Caco-2 (cell line): ENCODE measurements at regions of chr2 and their contacts with region 1.

Region 1: DNA sequence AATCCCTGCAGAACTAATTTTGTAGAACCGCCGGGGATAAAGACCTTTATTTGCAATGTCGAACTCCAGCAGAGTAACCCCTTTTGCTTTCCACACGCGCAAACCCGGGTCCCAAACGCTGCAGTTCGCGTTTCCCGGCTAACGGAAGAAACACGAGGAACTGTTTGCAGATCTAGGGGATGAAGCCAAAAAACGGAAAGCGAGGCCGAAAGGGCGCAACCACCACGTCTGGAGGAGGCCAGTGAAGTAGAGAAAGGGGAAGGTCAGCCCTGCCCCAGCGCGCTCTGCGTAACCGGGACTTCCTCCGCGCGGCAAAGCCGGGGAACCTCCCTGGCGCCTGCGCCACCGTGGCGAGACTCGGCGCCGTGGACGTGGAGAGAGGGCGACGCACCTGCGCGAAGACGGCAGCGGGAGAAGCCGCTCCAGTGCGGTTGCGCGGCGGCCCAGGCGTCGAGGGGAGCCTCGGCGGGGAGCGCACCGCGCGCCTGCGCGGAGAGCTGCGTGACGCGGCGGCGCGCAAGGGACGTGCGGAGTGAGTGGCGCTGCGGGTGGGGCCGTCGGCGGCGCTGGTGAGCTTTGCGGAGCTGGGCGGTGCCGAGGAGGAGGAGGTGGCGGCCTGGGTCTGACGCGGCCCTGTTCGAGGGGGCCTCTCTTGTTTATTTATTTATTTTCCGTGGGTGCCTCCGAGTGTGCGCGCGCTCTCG is at the start of gene PPP1CB:
- DNase-seq: peak; percentile 96 to 97
- H3K4me3 ChIP-seq: peak within 1 kb of the TSS; percentile 89
- H3K4me3 Mint-ChIP-seq: peak within 1 kb of the TSS; percentile 97
- H3K27ac Mint-ChIP-seq: peak within 1 kb of the TSS; percentile 99
- H3K4me1 ChIP-seq: peaks cover 15% of the 10 kb centered on the region
- H3K4me1 Mint-ChIP-seq: peaks cover 31% of the 10 kb centered on the region
- H3K27me3 ChIP-seq: no peaks in the 10 kb centered on the region
- H3K27me3 Mint-ChIP-seq: no peaks in the 10 kb centered on the region
- CTCF ChIP-seq: peak in 1 of 2 experiments; percentile 43
- total RNA-seq, gene PPP1CB: 185 and 190 TPM in 2 replicates

Region 2: DNA sequence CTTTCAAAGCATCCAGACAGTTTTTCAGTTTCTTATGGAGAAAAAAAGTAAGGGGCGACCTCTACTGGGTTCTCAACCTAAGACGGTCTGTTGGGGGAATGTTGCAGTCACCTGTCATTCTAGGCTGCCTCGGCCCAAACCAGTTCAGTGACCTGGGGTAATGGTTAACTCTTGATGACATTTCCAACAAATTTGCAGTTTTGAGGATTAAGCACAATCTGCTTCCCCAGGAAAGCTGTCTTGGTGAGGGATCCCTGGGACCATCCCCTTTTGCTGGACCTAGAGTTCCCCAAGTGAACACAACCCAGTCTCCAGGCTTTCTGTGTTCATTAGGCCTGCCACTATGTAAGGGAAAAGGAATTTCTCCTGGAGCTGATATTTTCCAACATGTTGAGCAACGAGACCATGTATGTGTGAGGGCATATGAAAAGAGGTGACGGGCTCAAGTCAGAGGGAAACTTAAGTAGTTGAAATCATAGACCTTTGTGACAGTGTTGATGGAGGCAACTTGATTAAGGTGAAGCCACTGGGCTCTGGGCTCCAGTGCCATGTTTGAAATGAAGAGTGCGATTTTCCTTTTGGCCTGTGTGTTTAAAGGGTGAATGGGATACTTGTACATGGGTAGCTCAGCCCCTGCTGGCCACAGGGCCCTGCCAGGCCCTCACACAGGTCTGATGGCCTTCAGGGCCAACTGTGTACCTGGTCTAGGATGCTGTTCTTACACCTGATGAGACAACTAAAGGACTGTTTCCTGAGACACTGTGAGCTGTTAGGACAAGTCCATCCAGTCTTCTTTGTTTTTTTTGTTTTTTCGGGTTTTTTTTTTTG is 331.7 kb before region 1 on chr2:
- CTCF ChIA-PET with region 1: no interaction called
- POLR2A ChIA-PET with region 1: no interaction called
- intact Hi-C with region 1: loop called (anchors 1 kb)
- DNase-seq: peak; percentile 85 to 86
- H3K4me3 ChIP-seq: no peak overlapping the region
- H3K4me3 Mint-ChIP-seq: peak overlapping the region; percentile 52
- H3K27ac Mint-ChIP-seq: peak overlapping the region; percentile 93
- H3K4me1 ChIP-seq: peaks cover 23% of the 10 kb centered on the region
- H3K4me1 Mint-ChIP-seq: peaks cover 19% of the 10 kb centered on the region
- H3K27me3 ChIP-seq: no peaks in the 10 kb centered on the region
- H3K27me3 Mint-ChIP-seq: no peaks in the 10 kb centered on the region
- CTCF ChIP-seq: peak; percentile 32 to 47

Region 3: DNA sequence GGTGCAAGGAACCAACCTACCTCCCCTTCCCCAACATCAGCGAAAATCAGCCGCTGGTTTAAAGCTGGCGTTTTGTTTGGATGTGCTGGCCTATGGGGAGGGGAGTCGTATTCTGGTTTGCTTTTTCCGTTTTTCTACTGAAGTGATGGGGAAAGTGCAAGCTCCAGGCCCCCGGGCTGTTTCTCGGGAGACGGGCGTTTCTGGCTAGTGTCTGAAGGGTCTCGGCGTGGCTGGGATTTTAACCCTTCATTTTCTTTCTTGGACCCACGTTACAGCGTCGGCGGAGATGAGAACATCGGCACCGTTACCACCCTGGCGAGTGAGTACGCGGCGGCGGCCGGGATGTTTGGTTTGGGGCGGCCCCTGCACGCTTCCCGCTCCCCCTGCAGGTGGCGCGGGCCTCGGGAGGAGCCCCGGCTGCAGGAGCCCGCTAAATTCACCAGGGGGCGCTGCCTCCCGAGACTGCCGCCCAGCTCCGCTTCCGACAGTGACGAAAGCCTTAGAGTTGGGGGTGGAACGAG is 184.8 kb before region 1 on chr2:
- CTCF ChIA-PET with region 1: interaction called, 9 read pairs
- POLR2A ChIA-PET with region 1: interaction called, 4 read pairs
- intact Hi-C with region 1: loop called (anchors 1 kb)
- DNase-seq: peak; percentile 80 to 93
- H3K4me3 ChIP-seq: peak overlapping the region; percentile 31
- H3K4me3 Mint-ChIP-seq: peak overlapping the region; percentile 76
- H3K27ac Mint-ChIP-seq: peak overlapping the region; percentile 62
- H3K4me1 ChIP-seq: peaks cover 22% of the 10 kb centered on the region
- H3K4me1 Mint-ChIP-seq: peaks cover 11% of the 10 kb centered on the region
- H3K27me3 ChIP-seq: no peaks in the 10 kb centered on the region
- H3K27me3 Mint-ChIP-seq: no peaks in the 10 kb centered on the region
- CTCF ChIP-seq: peak; percentile 99 to 100

Region 4: GRCh38 chr2:28621172-28622100 is 130.0 kb before region 1 on chr2:
- CTCF ChIA-PET with region 1: interaction called, 5 read pairs
- POLR2A ChIA-PET with region 1: no interaction called
- intact Hi-C with region 1: loop called (anchors 1 kb)
- DNase-seq: peak in 1 of 2 experiments; percentile 51
- H3K4me3 ChIP-seq: no peak overlapping the region
- H3K4me3 Mint-ChIP-seq: no peak overlapping the region
- H3K27ac Mint-ChIP-seq: peak overlapping the region; percentile 80
- H3K4me1 ChIP-seq: peaks cover 20% of the 10 kb centered on the region
- H3K4me1 Mint-ChIP-seq: peaks cover 28% of the 10 kb centered on the region
- H3K27me3 ChIP-seq: no peaks in the 10 kb centered on the region
- H3K27me3 Mint-ChIP-seq: no peaks in the 10 kb centered on the region
- CTCF ChIP-seq: peak in 1 of 2 experiments; percentile 55

Region 5: GRCh38 chr2:28654978-28655320 is 96.5 kb before region 1 on chr2:
- CTCF ChIA-PET with region 1: interaction called, 3 read pairs
- POLR2A ChIA-PET with region 1: interaction called, 6 read pairs
- intact Hi-C with region 1: loop called (anchors 2 kb)
- DNase-seq: peak; percentile 75 to 81
- H3K4me3 ChIP-seq: no peak overlapping the region
- H3K4me3 Mint-ChIP-seq: peak overlapping the region; percentile 33
- H3K27ac Mint-ChIP-seq: peak overlapping the region; percentile 75
- H3K4me1 ChIP-seq: peaks cover 52% of the 10 kb centered on the region
- H3K4me1 Mint-ChIP-seq: peaks cover 56% of the 10 kb centered on the region
- H3K27me3 ChIP-seq: no peaks in the 10 kb centered on the region
- H3K27me3 Mint-ChIP-seq: no peaks in the 10 kb centered on the region
- CTCF ChIP-seq: no peak

Region 6: GRCh38 chr2:28681158-28681571 is 70.2 kb before region 1 on chr2:
- CTCF ChIA-PET with region 1: interaction called, 7 read pairs
- POLR2A ChIA-PET with region 1: interaction called, 6 read pairs
- intact Hi-C with region 1: loop called (anchors 1 kb)
- DNase-seq: no peak
- H3K4me3 ChIP-seq: no peak overlapping the region
- H3K4me3 Mint-ChIP-seq: no peak overlapping the region
- H3K27ac Mint-ChIP-seq: no peak overlapping the region
- H3K4me1 ChIP-seq: peaks cover 38% of the 10 kb centered on the region
- H3K4me1 Mint-ChIP-seq: peaks cover 50% of the 10 kb centered on the region
- H3K27me3 ChIP-seq: no peaks in the 10 kb centered on the region
- H3K27me3 Mint-ChIP-seq: no peaks in the 10 kb centered on the region
- CTCF ChIP-seq: no peak

Region 7: GRCh38 chr2:28716265-28716867 is 35.0 kb before region 1 on chr2:
- CTCF ChIA-PET with region 1: interaction called, 3 read pairs
- POLR2A ChIA-PET with region 1: interaction called, 4 read pairs
- intact Hi-C with region 1: loop called (anchors 2 kb)
- DNase-seq: peak in 1 of 2 experiments; percentile 43
- H3K4me3 ChIP-seq: no peak overlapping the region
- H3K4me3 Mint-ChIP-seq: no peak overlapping the region
- H3K27ac Mint-ChIP-seq: peak overlapping the region; percentile 9
- H3K4me1 ChIP-seq: peaks cover 26% of the 10 kb centered on the region
- H3K4me1 Mint-ChIP-seq: peaks cover 29% of the 10 kb centered on the region
- H3K27me3 ChIP-seq: no peaks in the 10 kb centered on the region
- H3K27me3 Mint-ChIP-seq: no peaks in the 10 kb centered on the region
- CTCF ChIP-seq: no peak